ENCODE measurements at regions of chr14 and their contacts with region 1.

Region 1: DNA sequence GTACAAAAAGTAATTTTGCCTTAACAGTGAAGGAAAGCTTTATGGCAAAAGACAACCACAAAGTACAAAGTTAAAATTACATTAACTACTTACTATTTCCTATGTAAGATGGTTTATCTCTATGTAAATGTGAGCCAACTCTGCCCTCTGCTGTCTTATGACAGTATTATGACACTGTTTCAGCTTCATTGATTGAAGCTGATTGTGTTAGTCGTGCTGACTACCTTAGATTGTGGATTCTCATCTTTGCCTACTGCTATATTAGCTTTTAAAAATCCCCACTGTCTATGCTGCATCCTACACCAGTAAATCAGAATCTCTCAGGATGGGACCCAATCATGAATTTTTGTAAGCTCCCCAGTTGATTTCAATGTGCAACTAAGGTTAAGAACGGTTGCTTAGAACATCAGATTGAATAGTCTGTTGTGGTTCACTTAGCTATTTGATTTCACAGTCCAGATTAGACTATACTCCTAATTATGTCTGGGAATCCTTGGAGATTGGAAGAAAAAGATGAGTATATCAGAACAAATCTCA is 12.2 kb upstream of the SPTB start:
- DNase-seq: no peak
- H3K4me3 ChIP-seq: no peak overlapping the region
- H3K27ac ChIP-seq: no peak overlapping the region
- H3K4me1 ChIP-seq: no peaks in the 10 kb centered on the region
- H3K27me3 ChIP-seq: no peaks in the 10 kb centered on the region
- CTCF ChIP-seq: peak; percentile 33 to 58 (median 42)

Region 2: DNA sequence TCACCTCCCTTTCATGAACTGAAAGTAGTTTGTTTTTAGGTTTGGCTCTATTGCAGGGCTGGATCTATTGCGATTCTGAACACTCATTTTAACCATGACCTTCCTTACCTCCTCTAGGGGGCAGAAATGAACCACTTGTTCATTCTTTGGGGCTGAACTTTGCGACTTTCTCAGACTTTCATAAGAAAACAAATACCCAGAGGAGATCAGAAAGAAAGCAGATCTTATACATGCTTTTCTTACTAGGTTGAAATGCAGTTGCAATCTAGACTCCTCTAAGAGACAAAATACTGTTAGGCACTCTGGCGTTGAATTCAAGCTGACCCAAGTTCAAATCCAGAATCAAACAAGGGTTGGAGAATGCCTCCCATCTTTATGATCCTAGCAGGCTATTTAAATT is 220.3 kb before region 1 on chr14:
- intact Hi-C with region 1: loop called (anchors 5 kb)
- DNase-seq: no peak
- H3K4me3 ChIP-seq: no peak overlapping the region
- H3K27ac ChIP-seq: no peak overlapping the region
- H3K4me1 ChIP-seq: peaks cover 0 to 5% of the 10 kb centered on the region in 2 donors
- H3K27me3 ChIP-seq: no peaks in the 10 kb centered on the region
- CTCF ChIP-seq: peak; percentile 70 to 80 (median 78)

Region 3: DNA sequence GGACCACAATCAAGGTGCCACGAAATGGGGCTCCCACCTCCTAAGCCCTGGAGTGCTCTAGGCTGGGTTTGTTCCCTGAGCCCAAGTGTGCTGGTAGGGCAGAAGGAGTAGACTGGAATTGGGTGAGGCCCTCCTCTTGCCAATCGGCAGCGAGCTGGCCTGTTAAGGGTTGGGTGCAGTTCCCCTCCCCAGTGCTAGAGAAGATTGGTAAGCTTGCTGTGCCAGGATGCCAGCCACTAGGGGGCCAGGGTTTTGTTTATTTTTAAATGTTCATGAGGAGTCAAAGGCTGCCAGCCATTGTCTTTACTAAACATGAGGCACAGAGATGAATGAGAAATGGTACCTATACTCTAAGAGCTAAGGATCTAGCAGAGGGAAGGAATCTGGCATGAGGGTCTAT is 91.9 kb before region 1 on chr14:
- intact Hi-C with region 1: loop called (anchors 1 kb)
- DNase-seq: no peak
- H3K4me3 ChIP-seq: no peak overlapping the region
- H3K27ac ChIP-seq: no peak overlapping the region
- H3K4me1 ChIP-seq: no peaks in the 10 kb centered on the region
- H3K27me3 ChIP-seq: no peaks in the 10 kb centered on the region
- CTCF ChIP-seq: peak in 2 of 3 experiments; percentile 15 to 44

Region 4: GRCh38 chr14:64823305-64823861 is 68.5 kb before region 1 on chr14:
- intact Hi-C with region 1: loop called (anchors 2 kb)
- DNase-seq: peak; percentile 22 to 84
- H3K4me3 ChIP-seq: peak overlapping the region; percentile 13 to 43
- H3K27ac ChIP-seq: no peak overlapping the region
- H3K4me1 ChIP-seq: peaks cover 0 to 9% of the 10 kb centered on the region in 2 donors
- H3K27me3 ChIP-seq: no peaks in the 10 kb centered on the region
- CTCF ChIP-seq: peak; percentile 79 to 89 (median 85)

Region 5: GRCh38 chr14:64937821-64938193 is 45.9 kb after region 1 on chr14:
- intact Hi-C with region 1: loop called (anchors 5 kb)
- DNase-seq: no peak
- H3K4me3 ChIP-seq: no peak overlapping the region
- H3K27ac ChIP-seq: no peak overlapping the region
- H3K4me1 ChIP-seq: peaks cover 0 to 9% of the 10 kb centered on the region in 2 donors
- H3K27me3 ChIP-seq: no peaks in the 10 kb centered on the region
- CTCF ChIP-seq: peak; percentile 11 to 49 (median 39)

Region 6: GRCh38 chr14:65084554-65085505 is 192.9 kb after region 1 on chr14:
- intact Hi-C with region 1: no loop called
- DNase-seq: no peak
- H3K4me3 ChIP-seq: no peak overlapping the region
- H3K27ac ChIP-seq: no peak overlapping the region
- H3K4me1 ChIP-seq: peaks cover 0 to 3% of the 10 kb centered on the region in 2 donors
- H3K27me3 ChIP-seq: no peaks in the 10 kb centered on the region
- CTCF ChIP-seq: no peak

Measured in ascending aorta (tissue), 2 donors.